ENCODE measurements at regions of chr4 and their contacts with region 1.

Region 1: DNA sequence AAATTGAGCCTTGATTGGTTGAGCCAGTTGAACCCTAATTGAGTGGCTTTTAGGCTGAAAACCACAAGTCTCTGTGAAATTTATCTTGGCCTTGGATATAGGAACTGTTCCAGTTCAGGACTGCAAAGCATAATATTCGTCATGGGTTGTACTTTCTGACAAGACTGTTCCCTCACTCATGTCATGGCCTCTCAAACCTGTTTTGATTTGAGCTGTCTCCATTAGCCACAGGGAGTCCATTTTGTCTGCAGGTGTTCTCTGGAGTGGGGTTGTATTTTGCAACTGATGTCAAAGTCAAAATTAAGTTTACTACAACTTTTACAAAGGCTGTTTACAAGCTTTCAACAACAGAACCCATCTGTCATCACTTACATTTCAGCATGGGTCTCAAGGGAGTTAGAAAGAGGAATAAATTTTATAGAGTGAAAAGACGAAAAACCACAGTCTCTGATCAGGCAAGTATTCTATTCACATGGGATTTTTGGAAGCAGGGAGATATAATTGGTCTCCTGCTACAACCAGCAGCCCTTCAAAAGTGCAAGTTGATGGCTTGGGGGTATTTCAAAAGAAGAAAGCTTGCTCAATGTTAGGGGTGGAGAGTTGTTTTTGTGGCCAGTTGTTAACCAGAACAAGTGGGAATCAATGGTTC is 1716.3 kb downstream of the C4orf33 start:
- DNase-seq: no peak
- ATAC-seq: no peak
- H3K4me3 ChIP-seq: no peak overlapping the region
- H3K27ac ChIP-seq: no peak overlapping the region
- H3K4me1 ChIP-seq: no peaks in the 10 kb centered on the region
- H3K27me3 ChIP-seq: no peaks in the 10 kb centered on the region
- CTCF ChIP-seq: no peak
- POLR2A ChIP-seq: no peak

Region 2: DNA sequence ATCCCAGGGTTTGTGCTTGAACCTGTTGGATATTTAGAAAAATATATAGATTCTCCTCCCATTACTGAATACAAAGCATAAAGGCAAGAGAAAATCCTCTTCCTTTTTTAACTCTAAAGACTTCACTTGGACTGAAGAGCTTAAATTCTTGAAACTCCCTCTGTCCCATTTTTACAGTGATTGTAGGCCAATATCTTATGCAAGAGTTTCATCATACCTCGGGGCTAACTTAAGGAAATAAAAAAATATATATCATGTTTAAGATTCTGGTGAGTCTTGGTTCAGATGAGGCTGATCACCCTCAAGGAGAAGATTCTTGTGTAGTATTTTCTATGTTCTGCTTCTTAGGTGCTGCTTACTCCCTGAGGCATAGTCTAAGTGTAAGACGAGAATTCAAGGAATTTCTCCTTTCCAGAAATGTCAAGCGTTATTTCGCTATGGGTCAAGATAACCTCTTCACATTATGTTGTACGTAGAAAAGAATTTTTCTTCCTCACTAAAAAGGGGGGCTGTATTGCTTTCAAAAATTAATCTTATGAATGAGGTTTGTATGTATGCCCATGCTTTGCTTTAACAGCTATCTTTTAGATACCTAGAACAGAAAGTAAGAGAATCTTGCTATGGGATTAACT is 266.5 kb before region 1 on chr4:
- in situ Hi-C with region 1: no loop called
- intact Hi-C with region 1: no loop called
- DNase-seq: no peak
- ATAC-seq: no peak
- H3K4me3 ChIP-seq: no peak overlapping the region
- H3K27ac ChIP-seq: no peak overlapping the region
- H3K4me1 ChIP-seq: no peaks in the 10 kb centered on the region
- H3K27me3 ChIP-seq: no peaks in the 10 kb centered on the region
- CTCF ChIP-seq: no peak
- POLR2A ChIP-seq: no peak

Region 3: GRCh38 chr4:130738233-130738632 is 74.0 kb before region 1 on chr4:
- in situ Hi-C with region 1: no loop called
- intact Hi-C with region 1: no loop called
- DNase-seq: no peak
- ATAC-seq: no peak
- H3K4me3 ChIP-seq: no peak overlapping the region
- H3K27ac ChIP-seq: no peak overlapping the region
- H3K4me1 ChIP-seq: no peaks in the 10 kb centered on the region
- H3K27me3 ChIP-seq: no peaks in the 10 kb centered on the region
- CTCF ChIP-seq: no peak
- POLR2A ChIP-seq: no peak

Region 4: GRCh38 chr4:130753926-130754325 is 58.3 kb before region 1 on chr4:
- in situ Hi-C with region 1: loop called in 1 of 4 experiments (anchors 10 kb)
- intact Hi-C with region 1: no loop called
- DNase-seq: no peak
- ATAC-seq: no peak
- H3K4me3 ChIP-seq: no peak overlapping the region
- H3K27ac ChIP-seq: no peak overlapping the region
- H3K4me1 ChIP-seq: no peaks in the 10 kb centered on the region
- H3K27me3 ChIP-seq: no peaks in the 10 kb centered on the region
- CTCF ChIP-seq: no peak
- POLR2A ChIP-seq: no peak

Region 5: DNA sequence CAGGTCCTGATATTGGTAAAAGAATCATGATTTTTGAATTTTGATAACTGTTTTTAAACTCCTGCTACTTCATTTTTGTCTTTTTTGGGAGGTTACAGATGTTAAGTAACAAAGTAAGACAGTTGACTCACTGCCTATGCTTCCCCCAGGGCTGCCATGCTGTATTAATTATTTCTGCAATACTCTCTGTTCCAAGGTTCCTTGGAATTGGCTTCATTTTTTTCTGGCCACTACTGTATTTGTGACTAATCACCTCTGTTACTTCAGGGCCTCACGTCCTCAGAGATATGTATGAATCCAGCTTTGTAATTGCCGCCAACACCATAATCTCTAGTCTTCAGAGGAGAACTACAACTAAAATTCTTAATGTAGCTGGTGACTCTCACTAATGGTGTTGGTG is 13.0 kb after region 1 on chr4:
- in situ Hi-C with region 1: no loop called
- intact Hi-C with region 1: loop called (anchors 1 kb)
- DNase-seq: no peak
- ATAC-seq: peak in 1 of 2 donors; percentile 56
- H3K4me3 ChIP-seq: no peak overlapping the region
- H3K27ac ChIP-seq: no peak overlapping the region
- H3K4me1 ChIP-seq: no peaks in the 10 kb centered on the region
- H3K27me3 ChIP-seq: no peaks in the 10 kb centered on the region
- CTCF ChIP-seq: no peak
- POLR2A ChIP-seq: no peak